Activated T-helper 2 cell treated with anti-CD3 and anti-CD28 coated beads, Interferon-gamma antibody, Interleukin-2, Interleukin-4, amounts not matched to agents 10 μg/mL and 5 μg/mL and 100 μg/mL, durations not matched to agents 14 hours and 24 hours and 36 hours (primary cell): ENCODE measurements at regions of chr7 and their contacts with region 1.

Region 1: DNA sequence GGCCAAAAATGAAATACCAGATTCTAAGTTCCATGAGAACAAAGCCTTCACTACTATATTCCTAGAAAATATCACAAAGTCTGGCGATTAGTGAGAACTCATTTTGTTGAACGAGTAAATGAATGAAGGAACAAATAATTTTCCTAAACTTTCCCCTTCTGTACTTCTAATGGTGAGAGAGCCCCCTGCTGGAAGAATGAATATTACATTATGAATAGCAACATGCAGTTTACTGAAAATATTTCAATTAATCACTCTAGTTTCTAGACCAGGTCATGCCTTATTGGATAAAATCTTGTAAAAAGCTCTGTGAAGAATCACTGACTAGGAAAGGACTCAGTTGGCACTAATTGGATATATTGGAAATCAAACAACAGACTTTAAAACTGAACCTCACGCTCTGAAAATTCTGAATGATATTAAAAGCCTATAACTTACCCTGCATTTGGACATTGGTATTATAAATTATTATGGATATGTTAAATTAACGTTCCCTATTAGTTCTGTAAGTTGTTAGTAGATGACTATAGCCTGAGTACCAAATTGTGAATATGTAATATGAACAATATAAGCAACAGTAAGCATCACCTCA is 32.4 kb upstream of the MTPN start:
- DNase-seq: no peak
- H3K4me3 Mint-ChIP-seq: no peak overlapping the region
- H3K27ac Mint-ChIP-seq: no peak overlapping the region
- H3K4me1 Mint-ChIP-seq: no peaks in the 10 kb centered on the region
- H3K27me3 Mint-ChIP-seq: peaks cover 9% of the 10 kb centered on the region

Region 2: DNA sequence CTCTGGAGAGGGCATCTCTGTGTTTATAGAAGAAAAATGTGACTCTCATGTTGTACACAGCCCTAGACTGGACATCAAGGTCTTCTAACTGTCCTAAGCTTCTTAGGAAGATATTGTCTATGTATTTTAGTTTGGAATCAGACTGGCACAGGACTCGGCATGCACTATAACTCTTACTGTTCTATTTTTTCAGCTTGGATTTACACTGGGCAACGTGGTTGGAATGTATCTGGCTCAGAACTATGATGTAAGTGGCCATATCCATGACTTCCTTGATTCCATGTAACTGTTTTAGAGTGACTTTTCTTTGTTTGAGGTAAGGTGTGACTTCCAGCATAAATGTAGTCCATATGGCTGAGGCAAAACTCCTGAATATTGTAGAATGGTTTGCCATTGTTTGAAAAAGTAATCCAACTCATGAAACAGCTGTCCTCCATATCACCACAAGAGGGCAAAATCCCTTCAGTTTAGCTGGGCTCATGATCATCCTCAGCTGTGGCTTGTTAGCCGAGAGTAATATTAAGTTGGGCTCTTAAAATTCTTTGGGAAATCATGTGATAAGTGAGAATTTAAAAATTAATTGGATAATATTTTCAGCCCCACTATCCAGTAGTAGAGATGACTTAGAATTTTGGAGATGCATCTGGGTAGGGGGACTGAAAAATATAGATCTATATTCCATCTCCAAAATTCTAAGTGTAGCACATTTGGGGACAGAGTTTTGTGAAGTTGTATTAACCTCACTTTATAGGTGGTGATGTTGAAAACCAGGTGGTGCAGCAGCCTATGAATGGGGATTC is 336.8 kb before region 1 on chr7:
- intact Hi-C with region 1: loop called (anchors 10 kb)
- DNase-seq: no peak
- H3K4me3 Mint-ChIP-seq: no peak overlapping the region
- H3K27ac Mint-ChIP-seq: no peak overlapping the region
- H3K4me1 Mint-ChIP-seq: peaks cover 7% of the 10 kb centered on the region
- H3K27me3 Mint-ChIP-seq: no peaks in the 10 kb centered on the region

Region 3: DNA sequence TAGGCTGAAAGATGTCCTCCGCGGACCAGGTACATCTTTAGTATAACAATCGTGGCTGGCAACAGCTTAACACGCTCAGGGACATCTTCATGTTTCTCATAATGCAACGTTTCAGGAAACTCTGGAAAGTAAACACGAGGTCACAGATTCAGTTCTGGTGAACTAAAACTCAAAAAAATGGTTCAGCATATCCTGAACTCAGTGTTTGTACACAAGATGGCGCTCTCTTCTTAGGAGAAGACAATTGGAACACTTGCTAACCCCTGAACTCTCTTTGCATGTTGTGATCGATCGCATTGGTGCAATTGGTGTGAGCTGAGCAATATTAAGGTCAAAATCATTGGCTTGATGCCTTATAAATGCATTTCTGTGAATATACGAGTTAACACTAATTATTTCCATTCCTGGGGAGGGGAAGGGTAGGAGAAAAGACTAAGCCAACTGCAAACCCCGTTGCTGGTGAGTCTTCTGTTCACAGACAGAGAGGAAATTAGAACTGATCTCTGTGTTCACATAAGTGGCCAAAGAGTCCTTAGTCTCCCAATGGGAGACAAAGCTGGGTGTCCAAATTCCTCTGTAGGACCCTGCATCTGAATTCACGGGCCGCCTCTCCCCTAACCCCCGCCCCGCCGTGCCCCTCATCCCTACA is 208.4 kb before region 1 on chr7:
- intact Hi-C with region 1: loop called (anchors 1 kb)
- DNase-seq: peak; percentile 11
- H3K4me3 Mint-ChIP-seq: no peak overlapping the region
- H3K27ac Mint-ChIP-seq: no peak overlapping the region
- H3K4me1 Mint-ChIP-seq: peaks cover 1% of the 10 kb centered on the region
- H3K27me3 Mint-ChIP-seq: peaks cover 13% of the 10 kb centered on the region

Region 4: DNA sequence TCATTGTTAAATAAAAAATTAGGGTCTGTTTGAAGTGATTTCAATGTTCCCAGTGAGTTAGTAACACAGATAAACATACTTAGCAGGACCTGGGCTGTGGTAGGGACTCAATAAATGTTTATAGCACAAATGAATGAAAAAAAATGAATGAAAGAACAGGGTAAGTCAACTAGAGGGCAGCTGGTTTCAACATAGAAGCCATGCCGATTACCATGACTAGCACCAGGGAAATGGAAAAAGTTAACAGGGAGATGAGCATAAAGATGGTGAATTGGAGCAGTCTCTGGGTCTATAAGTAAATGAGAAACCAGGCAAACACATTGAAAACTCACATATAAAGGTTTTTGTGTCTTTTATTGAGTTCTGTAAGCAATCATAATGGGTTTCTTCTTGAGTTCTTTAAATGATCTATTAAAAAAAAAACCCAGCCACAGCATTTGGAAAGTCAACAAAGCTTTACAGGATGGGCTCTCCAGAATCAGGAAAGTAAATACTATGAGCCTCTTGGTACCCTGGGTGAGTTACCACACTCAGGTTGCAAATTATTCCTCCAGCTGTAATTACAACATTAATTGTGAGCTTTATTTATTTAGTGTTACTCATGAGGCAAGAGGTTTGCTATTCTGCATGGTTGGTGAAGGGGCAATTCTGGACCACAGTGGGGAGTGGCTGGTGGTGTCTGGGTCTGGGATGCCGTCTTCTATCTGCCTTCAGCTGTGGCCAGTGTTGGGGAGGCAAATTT is 13.7 kb after region 1 on chr7:
- intact Hi-C with region 1: no loop called
- DNase-seq: no peak
- H3K4me3 Mint-ChIP-seq: no peak overlapping the region
- H3K27ac Mint-ChIP-seq: no peak overlapping the region
- H3K4me1 Mint-ChIP-seq: peaks cover 1% of the 10 kb centered on the region
- H3K27me3 Mint-ChIP-seq: peaks cover 13% of the 10 kb centered on the region

Region 5: DNA sequence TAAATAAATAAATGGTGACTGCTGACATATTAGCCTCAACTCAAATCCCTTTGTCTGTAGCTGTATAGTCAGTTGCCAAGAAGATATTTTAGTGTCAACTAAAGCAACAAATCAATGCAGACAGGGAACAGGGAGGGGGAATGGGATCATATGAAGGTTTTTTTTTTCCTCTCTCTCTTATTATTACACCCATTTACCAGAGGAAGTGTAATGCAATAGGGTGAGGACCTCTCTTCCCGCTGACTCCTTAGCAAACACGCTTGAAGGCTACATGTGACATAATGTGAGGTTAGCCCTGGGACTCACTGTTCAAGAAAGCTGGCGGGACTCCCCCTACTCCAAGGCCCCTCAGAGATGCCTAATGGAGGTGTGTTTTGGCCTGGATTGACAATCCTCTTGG is 947.1 kb after region 1 on chr7:
- intact Hi-C with region 1: no loop called
- DNase-seq: no peak
- H3K4me3 Mint-ChIP-seq: no peak overlapping the region
- H3K27ac Mint-ChIP-seq: no peak overlapping the region
- H3K4me1 Mint-ChIP-seq: no peaks in the 10 kb centered on the region
- H3K27me3 Mint-ChIP-seq: no peaks in the 10 kb centered on the region